ENCODE measurements at regions of chr3 and their contacts with region 1.

Region 1: GRCh38 chr3:85120879-85121278 is 162.1 kb downstream of the CADM2 start:
- DNase-seq: no peak
- H3K4me3 ChIP-seq: no peak overlapping the region
- H3K27ac ChIP-seq: no peak overlapping the region
- H3K4me1 ChIP-seq: no peaks in the 10 kb centered on the region
- H3K27me3 ChIP-seq: no peaks in the 10 kb centered on the region
- CTCF ChIP-seq: no peak

Region 2: DNA sequence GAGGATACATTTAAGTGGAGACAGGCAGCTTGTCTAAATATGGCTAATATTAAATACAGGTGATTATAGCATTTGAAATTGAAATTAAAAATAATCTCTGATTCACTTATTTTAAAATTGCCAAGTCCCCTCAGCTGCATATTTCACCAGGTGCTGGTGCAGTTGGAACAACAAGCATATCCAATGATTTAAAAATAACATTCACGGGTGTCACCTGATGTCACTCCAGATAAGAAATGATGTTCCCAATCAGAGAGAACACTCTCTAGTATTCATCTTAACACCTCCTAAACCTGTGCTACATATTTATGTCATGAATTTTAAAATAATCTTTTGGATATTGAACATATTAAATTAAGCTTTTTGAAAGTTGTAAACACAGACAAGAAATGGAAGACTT is 87.8 kb after region 1 on chr3:
- intact Hi-C with region 1: loop called (anchors 5 kb)
- DNase-seq: no peak
- H3K4me3 ChIP-seq: no peak overlapping the region
- H3K27ac ChIP-seq: no peak overlapping the region
- H3K4me1 ChIP-seq: no peaks in the 10 kb centered on the region
- H3K27me3 ChIP-seq: no peaks in the 10 kb centered on the region
- CTCF ChIP-seq: no peak